GM12878 (cell line): ENCODE measurements at regions of chr1 and their contacts with region 1.

Region 1: DNA sequence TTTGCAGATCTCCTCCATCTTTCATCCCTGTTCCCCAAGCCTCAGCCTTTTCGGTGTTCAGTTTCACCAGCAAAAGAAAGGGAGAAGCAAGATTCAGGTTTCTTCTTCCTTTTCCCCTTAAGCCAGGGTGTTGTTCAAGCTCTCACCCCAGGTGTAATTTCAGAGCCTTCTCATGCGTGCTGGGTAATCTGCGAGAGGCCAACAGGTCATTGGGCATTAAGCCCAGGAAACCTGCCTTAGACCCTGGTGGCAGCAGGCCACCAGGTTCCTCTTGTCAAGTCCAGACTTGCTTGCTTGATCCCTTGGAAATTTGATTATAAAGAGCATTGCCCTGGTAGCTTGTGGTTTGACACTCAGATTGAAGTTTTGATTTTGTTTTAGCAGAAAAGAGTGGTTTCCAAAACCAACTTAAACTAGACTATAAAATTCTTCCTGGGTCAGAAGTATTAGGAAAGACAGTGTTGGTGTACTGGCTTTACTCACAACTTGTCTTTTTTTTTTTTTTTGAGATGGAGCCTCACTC is 6.9 kb downstream of the AKR1A1 start:
- DNase-seq: no peak
- ATAC-seq: peak; percentile 65
- H3K4me3 ChIP-seq: no peak overlapping the region
- H3K27ac ChIP-seq: peak overlapping the region; percentile 69
- H3K4me1 ChIP-seq: peaks cover 7% of the 10 kb centered on the region
- H3K27me3 ChIP-seq: no peaks in the 10 kb centered on the region
- CTCF ChIP-seq: no peak
- EP300 ChIP-seq: no peak
- POLR2A ChIP-seq: no peak
- RAD21 ChIP-seq: no peak

Region 2: GRCh38 chr1:45047032-45047431 is 510.5 kb before region 1 on chr1:
- CTCF ChIA-PET with region 1: no interaction called
- POLR2A ChIA-PET with region 1: no interaction called
- RAD21 ChIA-PET with region 1: no interaction called
- SMC1A ChIA-PET with region 1: no interaction called
- in situ Hi-C with region 1: no loop called
- intact Hi-C with region 1: no loop called
- DNase-seq: no peak
- ATAC-seq: no peak
- H3K4me3 ChIP-seq: no peak overlapping the region
- H3K27ac ChIP-seq: no peak overlapping the region
- H3K4me1 ChIP-seq: peaks cover 14% of the 10 kb centered on the region
- H3K27me3 ChIP-seq: no peaks in the 10 kb centered on the region
- CTCF ChIP-seq: no peak
- EP300 ChIP-seq: no peak
- POLR2A ChIP-seq: no peak
- RAD21 ChIP-seq: no peak

Region 3: DNA sequence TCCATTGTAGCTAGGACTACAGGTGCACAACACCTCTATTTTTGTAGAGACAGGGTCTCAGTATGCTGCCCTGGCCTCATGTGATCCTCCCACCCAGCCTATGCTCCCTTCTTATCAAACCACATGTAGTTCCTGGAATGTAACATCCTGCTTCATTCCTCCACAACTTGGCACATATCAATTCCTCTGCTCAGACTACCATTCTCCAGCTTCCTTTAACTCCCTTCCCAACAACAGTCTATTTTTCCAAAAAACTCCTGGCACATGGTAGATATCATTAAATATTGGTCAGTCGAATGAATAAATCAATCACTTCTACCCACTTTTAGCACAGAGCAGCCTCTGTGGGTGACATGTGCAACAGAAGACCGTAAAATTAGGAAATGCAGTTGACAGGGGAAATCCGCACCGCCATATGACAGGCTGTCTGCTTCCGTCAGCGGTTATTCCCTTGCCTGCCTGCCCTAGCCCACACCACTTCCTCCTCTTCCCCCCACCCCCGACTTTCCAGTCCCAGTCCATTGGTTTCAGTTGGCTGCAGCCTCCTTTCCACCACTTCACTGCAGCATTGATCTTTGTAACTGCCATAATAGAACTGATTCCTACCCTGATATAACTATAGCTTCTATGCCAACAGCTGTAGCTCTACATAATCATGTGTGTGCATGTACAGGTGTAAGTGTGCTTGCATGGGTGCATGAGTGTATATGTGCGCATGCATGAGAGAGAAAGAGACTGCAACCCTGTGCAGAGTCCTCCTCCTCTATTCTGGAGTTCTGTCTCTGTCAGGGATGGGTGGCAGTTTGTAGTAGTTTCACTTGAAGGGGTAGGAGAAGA is 13.7 kb before region 1 on chr1:
- CTCF ChIA-PET with region 1: interaction called, 6 read pairs
- POLR2A ChIA-PET with region 1: interaction called, 24 read pairs
- RAD21 ChIA-PET with region 1: interaction called, 5 read pairs
- SMC1A ChIA-PET with region 1: interaction called, 10 read pairs
- in situ Hi-C with region 1: no loop called
- intact Hi-C with region 1: no loop called
- DNase-seq: peak; percentile 76
- ATAC-seq: peak; percentile 79
- H3K4me3 ChIP-seq: peak overlapping the region; percentile 25; the same call in 1 of the 2 replicates
- H3K27ac ChIP-seq: peak overlapping the region; percentile 78
- H3K4me1 ChIP-seq: peaks cover 30% of the 10 kb centered on the region
- H3K27me3 ChIP-seq: no peaks in the 10 kb centered on the region
- CTCF ChIP-seq: no peak
- EP300 ChIP-seq: peak; percentile 84 to 93
- POLR2A ChIP-seq: 0 out of 2 replicates have a peak, but pooled peaks have one; percentile 29
- RAD21 ChIP-seq: no peak

Region 4: DNA sequence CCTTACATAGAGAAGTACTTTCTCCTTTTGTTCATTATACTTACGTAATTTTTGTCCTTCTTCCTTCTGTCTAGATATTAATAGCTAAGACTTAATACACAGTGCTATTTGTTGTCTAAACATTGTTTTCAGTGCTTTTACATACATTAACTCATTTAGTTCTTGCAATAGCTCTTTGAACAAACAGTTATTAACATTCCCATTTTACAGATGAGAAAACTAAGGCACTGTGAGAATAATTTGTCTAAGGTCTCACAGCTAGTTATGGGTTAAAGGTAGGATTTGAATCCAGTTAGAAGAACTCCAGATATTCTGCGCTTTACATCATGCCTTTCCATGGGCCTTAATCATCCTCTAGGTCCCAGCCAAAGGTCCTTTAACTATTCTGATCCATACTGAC is 46.8 kb after region 1 on chr1:
- CTCF ChIA-PET with region 1: no interaction called
- POLR2A ChIA-PET with region 1: interaction called, 11 read pairs
- RAD21 ChIA-PET with region 1: no interaction called
- SMC1A ChIA-PET with region 1: no interaction called
- in situ Hi-C with region 1: no loop called
- intact Hi-C with region 1: no loop called
- DNase-seq: no peak
- ATAC-seq: no peak
- H3K4me3 ChIP-seq: no peak overlapping the region
- H3K27ac ChIP-seq: no peak overlapping the region
- H3K4me1 ChIP-seq: peaks cover 12% of the 10 kb centered on the region
- H3K27me3 ChIP-seq: no peaks in the 10 kb centered on the region
- CTCF ChIP-seq: no peak
- EP300 ChIP-seq: no peak
- POLR2A ChIP-seq: no peak
- RAD21 ChIP-seq: no peak

Region 5: GRCh38 chr1:45654540-45655280 is 97.2 kb after region 1 on chr1:
- CTCF ChIA-PET with region 1: no interaction called
- POLR2A ChIA-PET with region 1: no interaction called
- RAD21 ChIA-PET with region 1: no interaction called
- SMC1A ChIA-PET with region 1: no interaction called
- in situ Hi-C with region 1: no loop called
- intact Hi-C with region 1: no loop called
- DNase-seq: no peak
- ATAC-seq: no peak
- H3K4me3 ChIP-seq: no peak overlapping the region
- H3K27ac ChIP-seq: no peak overlapping the region
- H3K4me1 ChIP-seq: no peaks in the 10 kb centered on the region
- H3K27me3 ChIP-seq: no peaks in the 10 kb centered on the region
- CTCF ChIP-seq: no peak
- EP300 ChIP-seq: no peak
- POLR2A ChIP-seq: no peak
- RAD21 ChIP-seq: no peak